ENCODE measurements at regions of chr17 and their contacts with region 1.

Region 1: DNA sequence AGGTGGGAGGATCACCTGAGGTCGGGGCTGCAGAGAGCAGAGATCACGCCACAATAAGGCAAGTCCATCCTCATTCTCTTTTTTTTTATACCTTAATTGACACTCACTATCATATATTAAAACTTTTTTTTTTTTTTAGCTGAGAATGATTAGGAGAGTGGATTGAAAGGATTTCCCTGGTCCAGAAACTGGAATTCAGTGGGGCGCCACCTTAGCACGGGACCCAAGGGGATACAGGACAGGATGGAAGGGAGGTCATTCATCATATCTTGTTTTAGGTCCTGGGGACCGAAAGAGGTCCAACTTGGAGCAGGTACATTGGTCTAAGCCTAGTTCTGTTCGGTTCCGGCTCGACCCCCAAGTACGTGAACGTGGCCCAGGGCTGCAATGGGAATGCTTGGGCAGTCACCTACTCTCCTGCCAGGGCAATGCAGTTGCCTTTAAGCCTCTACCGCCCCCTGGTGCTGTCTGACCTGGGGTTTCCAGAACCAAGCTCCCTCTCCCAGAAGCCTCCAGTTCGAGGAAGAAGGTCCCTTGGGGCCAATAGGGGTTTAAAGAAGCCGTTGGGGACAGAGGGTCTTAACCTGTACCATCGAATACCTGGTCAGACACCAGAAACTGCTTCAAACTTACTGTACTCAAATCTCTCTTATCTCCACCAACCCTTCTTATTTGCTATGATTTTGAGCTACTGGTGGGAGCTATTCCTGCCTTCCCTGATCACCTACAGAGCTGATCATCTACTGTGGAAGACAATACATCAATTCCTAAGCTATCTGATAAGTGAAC is 19.9 kb upstream of the GPATCH8 start:
- DNase-seq: peak; percentile 80
- ATAC-seq: peak; percentile 90 to 92

Region 2: GRCh38 chr17:44210342-44211192 is 312.5 kb before region 1 on chr17:
- intact Hi-C with region 1: loop called in 1 of 2 experiments (anchors 5 kb)
- DNase-seq: peak; percentile 90
- ATAC-seq: peak; percentile 92 to 94

Region 3: GRCh38 chr17:44385287-44386181 is 137.5 kb before region 1 on chr17:
- intact Hi-C with region 1: loop called in 1 of 2 experiments (anchors 5 kb)
- DNase-seq: peak; percentile 89
- ATAC-seq: peak; percentile 92 to 94

Region 4: DNA sequence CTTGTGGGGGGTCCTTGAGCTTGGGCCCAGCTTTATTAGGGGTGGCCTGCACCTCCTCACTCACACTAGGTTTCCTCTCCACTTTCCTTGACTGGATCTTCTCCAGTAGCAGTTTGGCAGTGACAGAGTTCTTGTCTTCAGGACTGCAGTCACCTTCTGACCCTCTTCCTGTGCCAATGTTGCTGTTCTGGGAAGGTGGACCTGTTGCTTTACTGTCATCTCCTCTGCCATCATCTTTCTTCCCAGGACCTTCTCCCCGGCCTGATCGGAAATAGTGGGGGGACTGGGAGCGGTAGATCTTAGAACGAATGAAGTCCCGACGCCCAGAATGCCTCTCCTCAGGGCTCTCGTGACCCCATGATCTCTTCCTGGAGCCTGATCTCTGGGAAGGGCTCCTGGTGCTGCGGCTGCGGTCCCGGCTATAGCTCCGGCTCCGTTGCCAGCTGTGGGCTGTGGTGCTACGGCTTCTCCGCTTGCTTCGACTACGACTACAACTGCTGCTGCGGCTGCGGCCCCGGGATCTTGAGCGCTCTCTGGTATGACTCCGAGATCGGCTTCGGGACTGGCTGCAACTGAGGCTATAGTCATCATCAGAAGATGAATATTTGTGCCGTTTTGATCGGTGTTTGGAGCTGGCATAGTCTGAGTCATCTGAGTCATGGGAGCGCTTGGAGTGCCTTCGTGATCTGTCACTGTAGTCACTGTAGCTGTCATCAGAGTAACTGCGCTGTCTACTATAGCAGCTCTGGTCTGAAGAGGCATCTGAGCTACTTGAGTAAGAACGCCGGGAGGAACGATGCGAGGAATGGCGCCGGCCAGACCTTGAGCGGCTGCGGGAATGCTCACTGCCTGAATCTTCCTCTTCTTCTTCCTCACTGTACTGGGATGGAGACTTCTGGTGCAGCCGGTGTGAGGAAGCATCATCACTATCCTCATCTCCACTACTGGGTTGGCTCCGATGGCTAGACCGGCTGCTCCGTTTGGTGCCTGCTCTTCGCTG is 124.1 kb before region 1 on chr17:
- intact Hi-C with region 1: loop called (anchors 5 kb)
- DNase-seq: no peak
- ATAC-seq: peak in 1 of 2 donors; percentile 19

Measured in left cardiac atrium (tissue), 4 donors.